ENCODE measurements at regions of chr7 and their contacts with region 1.

Region 1: DNA sequence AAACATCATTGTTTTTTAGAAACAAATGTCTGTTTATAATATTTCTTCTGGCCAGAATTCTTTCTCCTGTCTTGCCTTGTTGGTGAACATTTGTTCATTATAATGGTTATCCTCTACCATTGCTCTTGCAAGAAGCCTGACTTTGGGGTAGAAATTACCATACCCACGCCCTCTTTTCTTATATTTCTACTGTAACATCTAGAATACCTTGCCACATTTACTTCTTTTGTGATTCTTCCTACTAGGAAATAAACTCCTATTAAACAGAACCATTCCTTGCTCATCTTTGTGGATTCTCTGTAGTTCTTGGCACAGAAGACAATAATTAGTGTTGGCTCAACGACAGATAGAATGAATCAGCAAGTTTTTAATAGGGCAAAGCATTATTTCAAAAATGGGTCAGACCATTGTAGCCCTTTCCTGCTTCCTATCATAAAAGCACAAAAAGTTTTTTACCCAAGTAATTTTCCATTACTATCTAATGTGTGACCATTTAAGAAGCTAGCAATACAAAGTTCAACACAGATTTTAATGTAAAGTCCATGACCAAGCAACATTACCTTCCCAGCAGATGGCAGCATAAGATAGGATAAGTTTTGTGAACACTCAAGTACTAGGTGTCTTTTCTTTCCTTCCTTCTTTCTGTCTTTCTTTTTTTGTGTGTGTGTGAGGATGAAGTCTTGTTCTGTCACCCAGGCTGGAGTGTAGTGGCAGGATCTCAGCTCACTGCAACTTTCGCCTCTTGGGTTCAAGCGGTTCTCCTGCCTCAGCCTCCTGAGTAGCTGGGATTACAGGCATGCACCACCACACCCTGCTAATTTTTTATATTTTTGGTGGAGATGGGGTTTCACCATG is 270.4 kb downstream of the HGF start:
- DNase-seq: peak; percentile 89

Region 2: DNA sequence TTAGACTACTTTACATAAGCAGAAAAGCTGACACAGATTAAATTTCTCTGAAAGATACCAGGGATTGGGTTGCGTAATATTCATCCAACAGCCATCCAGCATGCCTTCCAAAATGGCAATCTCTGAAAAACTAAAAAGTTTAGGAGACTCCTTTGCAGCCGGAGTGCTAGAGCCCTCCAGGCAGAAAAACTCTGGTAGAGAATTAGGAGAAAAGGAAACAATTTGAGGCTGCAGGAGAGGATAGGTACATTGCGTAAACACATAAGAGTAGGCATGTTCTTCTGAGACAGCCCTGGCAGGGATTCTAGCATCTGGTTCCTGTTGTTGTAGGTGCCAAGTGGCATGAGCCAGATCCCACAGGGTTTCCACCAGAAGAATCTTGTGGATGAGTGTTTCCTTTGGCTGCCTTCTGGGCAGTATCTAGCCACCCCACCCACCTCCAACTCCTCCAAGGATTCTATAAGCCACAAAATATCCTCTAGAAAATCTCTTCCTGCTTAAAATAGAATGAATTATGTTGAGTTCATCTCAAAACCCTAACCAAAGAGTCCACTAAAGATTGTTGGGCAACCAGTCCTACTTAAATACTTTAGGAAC is 132.1 kb before region 1 on chr7:
- in situ Hi-C with region 1: no loop called
- DNase-seq: no peak

Region 3: DNA sequence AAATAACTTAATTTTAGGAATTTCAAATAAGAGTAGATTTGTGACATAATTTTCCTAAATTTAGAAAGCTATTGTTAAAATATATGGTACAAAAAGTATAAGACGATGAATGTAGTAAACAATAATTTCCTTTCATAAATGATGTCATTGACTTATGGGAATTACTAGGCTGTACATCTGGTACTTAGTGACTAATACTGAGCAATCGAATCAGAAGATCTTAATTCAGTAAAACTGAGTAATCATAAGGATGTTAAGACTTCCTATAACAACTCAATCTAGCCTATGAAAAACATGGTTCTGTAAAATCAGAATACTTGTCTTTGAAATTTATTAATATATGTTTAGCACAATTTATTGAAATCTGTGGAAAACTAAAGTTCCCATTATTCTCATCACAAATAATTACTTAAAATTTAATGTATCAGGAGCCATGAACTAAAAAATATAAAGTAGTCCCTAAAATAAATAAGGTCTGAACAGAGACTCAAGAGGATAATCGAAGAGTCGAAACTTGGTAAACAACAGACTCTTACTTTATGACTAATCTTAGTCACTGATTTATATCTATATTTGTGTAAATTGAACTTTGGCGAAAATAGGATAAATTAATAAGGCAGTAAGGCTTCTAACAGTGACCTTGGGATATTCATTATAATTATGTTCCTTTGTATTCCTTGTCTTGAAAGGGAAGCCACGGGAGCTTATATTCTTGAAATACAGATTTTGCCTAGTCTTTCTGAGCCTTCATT is 128.2 kb after region 1 on chr7:
- in situ Hi-C with region 1: no loop called
- DNase-seq: no peak

Region 4: GRCh38 chr7:81715984-81716588 is 216.6 kb after region 1 on chr7:
- in situ Hi-C with region 1: loop called (anchors 25 kb)
- DNase-seq: peak; percentile 79

Region 5: GRCh38 chr7:81956520-81956919 is 457.0 kb after region 1 on chr7:
- in situ Hi-C with region 1: loop called (anchors 25 kb)
- DNase-seq: peak; percentile 71

Region 6: DNA sequence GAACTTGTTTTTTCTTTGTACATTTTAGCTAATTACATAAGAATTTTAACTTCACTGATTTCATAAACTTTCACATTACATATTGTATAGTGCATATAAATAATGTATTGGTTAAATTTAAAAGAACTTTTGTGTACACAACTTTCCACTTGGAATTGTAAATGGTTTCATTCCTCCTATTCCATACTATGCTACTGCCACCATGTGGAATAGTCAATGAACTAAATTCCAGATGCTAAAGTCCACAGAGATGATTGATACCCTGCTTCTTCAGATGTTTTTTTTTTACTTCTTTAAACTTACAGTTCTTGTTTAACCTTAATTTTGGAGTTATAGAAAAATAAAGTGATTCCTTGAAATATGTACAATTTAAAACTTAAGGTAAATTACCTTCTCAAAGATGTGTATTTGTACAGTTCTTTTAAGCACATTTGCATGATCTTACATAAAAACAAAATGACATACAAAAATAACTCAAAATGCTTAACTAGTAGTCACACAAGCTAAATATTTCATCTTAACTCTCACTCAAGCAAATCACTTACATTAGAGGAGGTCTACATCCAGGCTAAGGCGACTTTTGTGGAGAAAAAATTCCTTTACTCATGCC is 518.0 kb after region 1 on chr7:
- in situ Hi-C with region 1: loop called (anchors 25 kb)
- DNase-seq: peak; percentile 65

Region 7: GRCh38 chr7:82605247-82605872 is 1105.9 kb after region 1 on chr7:
- in situ Hi-C with region 1: loop called (anchors 25 kb)
- DNase-seq: peak; percentile 59

Measured in ACHN (cell line).